ENCODE measurements at regions of chr15 and their contacts with region 1.

Region 1: DNA sequence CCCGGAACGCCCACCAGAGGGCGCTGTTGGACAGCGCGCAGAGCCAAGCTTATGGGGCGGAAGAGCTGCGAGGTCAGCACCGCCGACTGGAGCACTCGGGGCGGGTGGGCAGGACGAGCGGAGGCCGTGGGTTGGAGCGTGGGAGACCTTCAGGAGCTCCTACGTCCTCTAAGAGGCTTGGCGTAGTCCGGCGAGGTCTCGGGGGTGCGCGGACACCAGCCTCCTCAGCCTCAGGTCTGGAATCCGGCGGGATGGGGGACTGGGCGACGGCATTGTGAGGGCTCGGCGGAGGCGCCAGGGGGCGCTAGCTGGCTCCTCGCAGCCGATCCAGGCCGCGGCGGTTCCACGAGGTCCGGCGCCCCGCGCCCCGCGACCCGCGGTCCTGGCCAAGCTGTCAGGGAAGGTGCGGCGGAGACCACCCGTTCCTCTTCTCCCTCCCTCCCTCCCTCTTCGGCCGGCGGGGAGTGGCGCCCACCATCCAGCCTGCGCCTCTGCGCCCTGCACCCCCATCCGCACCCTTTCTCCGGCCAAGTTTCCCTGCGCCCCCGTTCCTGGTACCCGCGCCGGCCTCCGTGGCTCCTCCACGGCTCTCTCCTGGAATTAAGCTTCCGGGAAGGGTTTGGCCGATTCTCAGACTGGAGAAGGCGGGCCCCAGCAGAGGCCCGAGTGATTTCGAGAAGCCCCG is 24.3 kb upstream of the POLG start:
- DNase-seq: peak; percentile 97
- H3K4me3 ChIP-seq: peak overlapping the region; percentile 35 to 78 (median 50)
- H3K27ac ChIP-seq: no peak overlapping the region
- H3K4me1 ChIP-seq: peaks cover 13 to 52% (median 30%) of the 10 kb centered on the region in 6 donors
- H3K27me3 ChIP-seq: peaks cover 14 to 100% (median 88%) of the 10 kb centered on the region in 7 donors
- CTCF ChIP-seq: peak; percentile 72 to 100 (median 99)
- POLR2A ChIP-seq: no peak

Region 2: GRCh38 chr15:89430530-89431341 is 71.8 kb after region 1 on chr15:
- intact Hi-C with region 1: loop called (anchors 2 kb)
- DNase-seq: peak; percentile 95
- H3K4me3 ChIP-seq: peak overlapping the region; percentile 8 to 69 (median 38)
- H3K27ac ChIP-seq: peak overlapping the region in 2 of 8 donors; percentile 7 to 45
- H3K4me1 ChIP-seq: peaks cover 0 to 24% (median 14%) of the 10 kb centered on the region in 6 donors
- H3K27me3 ChIP-seq: peaks cover 0 to 57% (median 0%) of the 10 kb centered on the region in 7 donors
- CTCF ChIP-seq: peak; percentile 98 to 99 (median 99)
- POLR2A ChIP-seq: no peak

Region 3: GRCh38 chr15:89472785-89473256 is 113.9 kb after region 1 on chr15:
- intact Hi-C with region 1: loop called (anchors 5 kb)
- DNase-seq: peak; percentile 83
- H3K4me3 ChIP-seq: no peak overlapping the region
- H3K27ac ChIP-seq: no peak overlapping the region
- H3K4me1 ChIP-seq: no peaks in the 10 kb centered on the region
- H3K27me3 ChIP-seq: peaks cover 0 to 68% (median 26%) of the 10 kb centered on the region in 7 donors
- CTCF ChIP-seq: peak; percentile 26 to 72 (median 58)
- POLR2A ChIP-seq: no peak

Region 4: DNA sequence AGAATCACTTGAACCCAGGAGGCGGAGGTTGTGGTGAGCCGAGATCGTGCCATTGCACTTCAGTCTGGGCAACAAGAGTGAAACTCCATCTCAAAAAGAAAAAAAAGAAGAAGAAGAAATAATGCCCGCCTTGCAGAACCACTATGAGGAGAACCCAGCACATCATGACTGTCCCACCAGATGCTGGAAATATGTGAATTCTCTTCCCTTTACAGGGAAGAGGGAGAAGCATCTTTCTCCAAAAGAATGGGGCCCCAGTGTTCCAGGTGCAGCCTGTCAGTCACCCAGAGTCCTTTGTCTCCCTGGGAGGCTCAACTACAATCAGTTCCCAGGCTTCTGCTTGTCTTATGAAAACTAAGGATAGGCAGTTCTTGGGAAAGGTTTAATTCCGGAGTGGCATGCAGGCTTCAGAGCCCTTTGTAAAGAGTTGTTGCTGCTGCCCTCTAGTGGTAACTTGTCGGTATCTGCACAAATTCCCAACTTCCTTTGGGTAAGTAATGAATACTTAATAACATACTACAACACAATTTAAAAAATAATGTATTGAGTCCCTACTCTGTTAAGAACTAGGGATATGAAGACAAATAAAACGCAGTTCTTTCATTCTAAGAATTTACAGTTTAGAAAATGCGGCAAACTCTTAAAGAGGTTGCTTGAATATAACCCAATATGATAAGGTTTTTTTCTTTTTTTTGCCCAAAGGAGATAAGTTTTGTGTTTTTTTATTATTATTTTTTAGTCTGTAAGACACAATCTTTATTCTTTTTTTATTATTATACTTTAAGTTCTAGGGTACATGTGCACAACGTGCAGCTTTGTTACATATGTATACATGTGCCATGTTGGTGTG is 197.7 kb after region 1 on chr15:
- intact Hi-C with region 1: loop called (anchors 10 kb)
- DNase-seq: no peak
- H3K4me3 ChIP-seq: no peak overlapping the region
- H3K27ac ChIP-seq: no peak overlapping the region
- H3K4me1 ChIP-seq: no peaks in the 10 kb centered on the region
- H3K27me3 ChIP-seq: peaks cover 0 to 34% (median 4%) of the 10 kb centered on the region in 7 donors
- CTCF ChIP-seq: peak in 10 of 11 experiments; percentile 20 to 82 (median 72)
- POLR2A ChIP-seq: no peak